Naive thymus-derived CD8-positive, alpha-beta T cell (primary cell): ENCODE measurements at regions of chr17 and their contacts with region 1.

Region 1: DNA sequence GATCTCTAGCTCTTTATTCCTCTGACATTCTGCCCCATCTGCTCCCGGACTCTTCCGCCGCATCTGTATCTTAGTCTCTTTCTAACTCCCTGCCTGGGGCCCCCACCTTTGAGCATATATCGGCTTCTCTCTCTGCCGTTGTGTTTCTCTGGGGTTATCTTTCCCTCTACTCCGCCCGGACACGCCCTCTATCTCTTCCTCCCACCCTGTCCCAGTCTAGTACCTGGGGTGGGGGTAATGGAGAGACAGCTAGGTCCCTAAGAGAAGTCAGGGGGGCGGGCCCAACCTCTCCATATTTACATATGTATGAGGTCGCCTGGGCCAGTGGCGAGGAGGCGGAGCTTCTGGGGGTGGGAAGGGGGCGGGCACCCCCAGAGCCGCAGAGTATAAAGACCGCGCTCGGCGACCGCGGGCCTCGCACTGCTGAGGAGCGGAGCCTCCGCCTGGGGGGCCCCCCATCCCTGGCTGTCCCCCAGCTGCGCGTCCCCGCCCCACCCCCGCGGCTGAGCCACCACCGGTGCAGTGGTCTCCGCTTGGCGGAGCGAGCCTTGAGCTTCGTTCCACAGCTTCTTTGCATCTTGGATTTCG is at the start of gene ATP1B2:
- DNase-seq: peak; percentile 57 to 91 (median 74)
- ATAC-seq: peak; percentile 90 to 91
- H3K4me3 Mint-ChIP-seq: peak within 1 kb of the TSS; percentile 80 to 98 (median 90)
- H3K27ac Mint-ChIP-seq: peak within 1 kb of the TSS in 9 of 10 donors; percentile 4 to 84 (median 72)
- H3K4me1 Mint-ChIP-seq: peaks cover 16 to 22% (median 19%) of the 10 kb centered on the region in 4 donors
- H3K27me3 Mint-ChIP-seq: peaks cover 3 to 27% (median 8%) of the 10 kb centered on the region in 5 donors
- polyA plus RNA-seq, gene ATP1B2: 0.17 to 0.57 TPM in 2 of 3 donors, not detected in the other

Region 2: GRCh38 chr17:7593296-7593695 is 57.3 kb before region 1 on chr17:
- POLR2A ChIA-PET with region 1: no interaction called
- DNase-seq: no peak
- ATAC-seq: no peak
- H3K4me3 Mint-ChIP-seq: no peak overlapping the region
- H3K27ac Mint-ChIP-seq: peak overlapping the region in 2 of 10 donors; percentile 0 to 18
- H3K4me1 Mint-ChIP-seq: peaks cover 0 to 6% (median under 1%) of the 10 kb centered on the region in 4 donors
- H3K27me3 Mint-ChIP-seq: no peaks in the 10 kb centered on the region

Region 3: DNA sequence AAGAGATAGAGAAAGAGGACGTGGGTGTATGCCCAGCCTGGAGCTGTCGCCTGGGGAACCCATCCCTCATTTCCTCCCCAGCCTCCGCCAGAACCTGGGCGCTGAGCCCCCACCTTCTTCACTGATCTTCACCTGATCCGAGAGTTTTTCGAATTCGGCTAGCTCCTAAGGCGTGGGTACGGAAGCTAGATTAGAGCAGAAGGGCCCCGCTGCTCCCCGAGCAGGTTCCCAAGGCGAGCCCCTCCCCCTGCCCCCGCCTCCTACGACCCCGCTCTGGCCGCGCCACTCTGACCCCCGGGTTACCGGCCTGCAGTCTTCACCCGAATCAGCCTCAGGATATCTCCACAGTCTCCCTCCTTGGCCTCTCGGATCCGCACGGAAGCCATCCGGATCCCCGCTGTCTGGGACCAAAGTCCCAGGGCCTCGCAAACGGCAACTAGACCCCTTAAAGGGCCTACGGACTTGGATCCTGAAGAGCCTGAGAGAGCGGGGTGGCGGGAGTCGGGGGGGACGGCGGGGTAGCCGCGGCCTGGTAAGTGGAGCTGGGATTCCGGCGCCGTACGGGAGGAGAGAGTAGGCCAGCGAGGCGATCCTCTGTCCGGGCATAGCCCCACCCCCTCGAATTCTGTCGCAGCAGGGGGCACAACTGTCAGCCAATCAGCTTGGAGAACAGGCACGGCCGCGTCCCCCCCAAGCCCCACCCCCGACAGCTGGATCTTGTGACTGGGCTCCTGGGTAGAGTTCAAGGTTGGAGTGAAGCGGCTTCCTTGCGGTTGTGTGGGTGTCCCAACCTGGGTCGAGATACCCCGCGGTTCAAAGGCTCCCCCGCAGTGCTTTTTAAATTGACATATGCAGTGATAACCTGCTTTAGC is 23.1 kb before region 1 on chr17 and contains the start of gene SAT2:
- POLR2A ChIA-PET with region 1: interaction called, 12 read pairs
- DNase-seq: peak; percentile 75 to 95 (median 80)
- ATAC-seq: peak; percentile 93 to 95
- H3K4me3 Mint-ChIP-seq: peak within 1 kb of the TSS; percentile 90 to 97 (median 94)
- H3K27ac Mint-ChIP-seq: peak within 1 kb of the TSS; percentile 79 to 98 (median 94)
- H3K4me1 Mint-ChIP-seq: peaks cover 7 to 18% (median 16%) of the 10 kb centered on the region in 4 donors
- H3K27me3 Mint-ChIP-seq: no peaks in the 10 kb centered on the region
- polyA plus RNA-seq, gene SAT2: 38.5 to 40.0 (median 39.4) TPM